CD8-positive, alpha-beta T cell (primary cell): ENCODE measurements at regions of chr4 and their contacts with region 1.

Region 1: DNA sequence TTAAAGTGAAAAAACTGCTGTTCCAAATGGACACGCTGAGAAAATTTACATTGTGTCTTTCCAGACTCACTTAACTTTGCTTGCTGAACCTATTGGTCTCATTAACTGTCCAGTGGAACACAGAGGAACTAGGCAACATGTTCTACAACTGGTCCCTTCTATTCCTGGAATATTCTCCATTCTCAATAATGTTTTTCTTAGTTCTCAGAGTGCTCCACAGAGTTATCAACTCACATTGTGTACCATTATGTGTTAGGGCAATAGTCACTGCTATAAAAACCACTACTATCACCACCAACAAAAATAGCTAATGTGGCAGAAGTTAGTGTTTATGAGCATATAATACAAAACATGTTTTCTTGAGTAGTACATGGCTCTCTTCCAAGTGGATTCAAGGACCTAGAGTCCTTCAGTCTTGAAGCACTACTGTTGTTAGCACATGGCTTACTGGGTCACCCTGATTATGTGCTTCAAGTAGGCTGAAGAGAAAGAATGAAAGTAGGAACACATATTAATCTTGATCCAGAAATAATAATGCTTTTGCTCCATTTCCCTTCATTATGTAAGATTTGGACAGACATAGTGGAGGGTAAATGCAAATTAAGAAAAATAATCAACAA is 865.3 kb upstream of the HS3ST1 start:
- DNase-seq: no peak
- ATAC-seq: no peak
- H3K4me3 ChIP-seq: no peak overlapping the region
- H3K4me3 Mint-ChIP-seq: no peak overlapping the region
- H3K27ac ChIP-seq: no peak overlapping the region
- H3K27ac Mint-ChIP-seq: no peak overlapping the region
- H3K4me1 ChIP-seq: no peaks in the 10 kb centered on the region
- H3K4me1 Mint-ChIP-seq: no peaks in the 10 kb centered on the region
- H3K27me3 ChIP-seq: no peaks in the 10 kb centered on the region
- H3K27me3 Mint-ChIP-seq: no peaks in the 10 kb centered on the region
- CTCF ChIP-seq: no peak

Region 2: GRCh38 chr4:12319765-12320164 is 25.7 kb after region 1 on chr4:
- CTCF ChIA-PET with region 1: no interaction called
- POLR2A ChIA-PET with region 1: no interaction called
- intact Hi-C with region 1: loop called in 1 of 2 experiments (anchors 2 kb)
- DNase-seq: no peak
- ATAC-seq: no peak
- H3K4me3 ChIP-seq: no peak overlapping the region
- H3K4me3 Mint-ChIP-seq: no peak overlapping the region
- H3K27ac ChIP-seq: no peak overlapping the region
- H3K27ac Mint-ChIP-seq: no peak overlapping the region
- H3K4me1 ChIP-seq: no peaks in the 10 kb centered on the region
- H3K4me1 Mint-ChIP-seq: no peaks in the 10 kb centered on the region
- H3K27me3 ChIP-seq: no peaks in the 10 kb centered on the region
- H3K27me3 Mint-ChIP-seq: no peaks in the 10 kb centered on the region
- CTCF ChIP-seq: no peak

Region 3: GRCh38 chr4:12538162-12538561 is 244.1 kb after region 1 on chr4:
- CTCF ChIA-PET with region 1: no interaction called
- POLR2A ChIA-PET with region 1: no interaction called
- intact Hi-C with region 1: no loop called
- DNase-seq: no peak
- ATAC-seq: no peak
- H3K4me3 ChIP-seq: no peak overlapping the region
- H3K4me3 Mint-ChIP-seq: no peak overlapping the region
- H3K27ac ChIP-seq: no peak overlapping the region
- H3K27ac Mint-ChIP-seq: no peak overlapping the region
- H3K4me1 ChIP-seq: no peaks in the 10 kb centered on the region
- H3K4me1 Mint-ChIP-seq: no peaks in the 10 kb centered on the region
- H3K27me3 ChIP-seq: no peaks in the 10 kb centered on the region
- H3K27me3 Mint-ChIP-seq: no peaks in the 10 kb centered on the region
- CTCF ChIP-seq: no peak